ENCODE measurements at regions of chr1 and their contacts with region 1.

Region 1: GRCh38 chr1:65209005-65209885 is 61.2 kb downstream of the AK4 start:
- DNase-seq: peak; percentile 28
- H3K4me3 Mint-ChIP-seq: no peak overlapping the region
- H3K27ac Mint-ChIP-seq: no peak overlapping the region
- H3K4me1 Mint-ChIP-seq: peaks cover 23% of the 10 kb centered on the region
- H3K27me3 Mint-ChIP-seq: peaks cover 3% of the 10 kb centered on the region

Region 2: GRCh38 chr1:64686828-64687724 is 522.2 kb before region 1 on chr1:
- CTCF ChIA-PET with region 1: no interaction called
- intact Hi-C with region 1: loop called (anchors 2 kb)
- DNase-seq: peak; percentile 39
- H3K4me3 Mint-ChIP-seq: no peak overlapping the region
- H3K27ac Mint-ChIP-seq: no peak overlapping the region
- H3K4me1 Mint-ChIP-seq: peaks cover 5% of the 10 kb centered on the region
- H3K27me3 Mint-ChIP-seq: no peaks in the 10 kb centered on the region

Region 3: DNA sequence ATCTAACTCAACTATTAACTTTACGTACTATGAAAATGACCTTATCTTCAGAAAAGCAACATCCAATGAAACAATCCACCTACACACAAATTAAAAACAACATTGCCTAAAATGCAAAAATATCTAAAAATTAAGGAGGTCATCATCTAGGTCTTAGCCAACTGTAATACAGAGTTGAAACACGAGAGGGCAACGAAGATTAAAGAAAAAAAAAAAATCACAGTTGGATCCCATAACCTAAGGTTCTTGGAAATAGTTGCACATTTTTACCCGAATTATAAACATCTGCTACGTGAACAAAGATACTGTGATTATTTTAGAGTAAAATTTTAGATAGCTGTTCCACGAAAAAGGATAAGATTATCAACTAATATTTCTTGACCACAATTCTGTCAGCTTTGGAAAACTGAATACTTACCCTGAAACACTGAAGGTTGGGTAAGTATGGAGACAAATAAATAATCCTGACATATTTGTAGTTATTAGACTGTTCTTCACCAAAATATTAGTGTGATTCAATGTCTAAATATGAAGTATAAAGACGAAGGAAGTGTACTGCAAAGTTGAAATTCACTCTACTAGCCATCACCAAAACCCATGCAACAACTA is 149.2 kb before region 1 on chr1:
- CTCF ChIA-PET with region 1: interaction called, 17 read pairs
- intact Hi-C with region 1: loop called (anchors 1 kb)
- DNase-seq: no peak
- H3K4me3 Mint-ChIP-seq: no peak overlapping the region
- H3K27ac Mint-ChIP-seq: no peak overlapping the region
- H3K4me1 Mint-ChIP-seq: peaks cover 61% of the 10 kb centered on the region
- H3K27me3 Mint-ChIP-seq: no peaks in the 10 kb centered on the region

Region 4: GRCh38 chr1:65148548-65149350 is 60.5 kb before region 1 on chr1:
- CTCF ChIA-PET with region 1: interaction called, 4 read pairs
- intact Hi-C with region 1: loop called (anchors 2 kb)
- DNase-seq: peak; percentile 41
- H3K4me3 Mint-ChIP-seq: peak overlapping the region; percentile 80
- H3K27ac Mint-ChIP-seq: no peak overlapping the region
- H3K4me1 Mint-ChIP-seq: peaks cover 10% of the 10 kb centered on the region
- H3K27me3 Mint-ChIP-seq: peaks cover 47% of the 10 kb centered on the region

Region 5: GRCh38 chr1:65189576-65190115 is 19.6 kb before region 1 on chr1:
- CTCF ChIA-PET with region 1: no interaction called
- intact Hi-C with region 1: no loop called
- DNase-seq: no peak
- H3K4me3 Mint-ChIP-seq: no peak overlapping the region
- H3K27ac Mint-ChIP-seq: no peak overlapping the region
- H3K4me1 Mint-ChIP-seq: no peaks in the 10 kb centered on the region
- H3K27me3 Mint-ChIP-seq: peaks cover 2% of the 10 kb centered on the region

Region 6: GRCh38 chr1:65393347-65393746 is 184.1 kb after region 1 on chr1:
- CTCF ChIA-PET with region 1: no interaction called
- intact Hi-C with region 1: loop called (anchors 1 kb)
- DNase-seq: peak; percentile 39
- H3K4me3 Mint-ChIP-seq: no peak overlapping the region
- H3K27ac Mint-ChIP-seq: no peak overlapping the region
- H3K4me1 Mint-ChIP-seq: peaks cover 22% of the 10 kb centered on the region
- H3K27me3 Mint-ChIP-seq: no peaks in the 10 kb centered on the region

Region 7: DNA sequence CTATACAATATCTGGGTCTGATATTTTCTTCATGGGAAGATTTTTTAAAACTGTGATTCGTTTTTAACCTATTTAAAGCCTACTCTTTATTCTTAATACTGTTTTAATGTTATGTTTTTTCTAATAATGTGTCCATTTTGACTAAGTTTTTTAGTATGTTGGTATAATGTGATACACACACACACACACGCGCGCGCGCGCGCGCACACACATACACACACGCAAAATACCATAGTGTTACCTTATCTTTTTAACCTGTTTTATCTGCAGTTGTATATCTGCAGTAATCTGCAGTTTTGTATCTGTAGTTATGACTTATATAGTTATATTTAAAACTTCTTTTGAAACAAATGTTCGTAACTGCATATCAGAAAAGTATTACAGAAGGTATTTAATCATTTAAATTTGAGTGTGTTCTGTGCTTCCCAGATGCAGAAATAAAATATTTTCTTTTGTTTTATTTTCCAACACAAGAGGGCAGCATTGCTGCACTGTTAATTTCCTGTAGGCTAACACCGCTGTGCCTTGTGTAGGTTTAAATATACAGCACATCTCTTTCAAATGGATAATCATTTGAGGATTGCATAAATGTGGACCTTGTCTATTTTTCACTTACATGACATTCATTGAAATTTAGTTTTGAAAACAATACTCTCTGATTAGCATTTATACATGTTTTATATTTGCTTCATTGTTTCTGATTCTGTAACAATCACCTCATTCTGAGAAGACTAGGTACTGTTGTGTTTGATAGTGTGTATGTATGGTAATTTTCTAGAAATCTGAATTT is 749.5 kb after region 1 on chr1:
- CTCF ChIA-PET with region 1: no interaction called
- intact Hi-C with region 1: loop called (anchors 10 kb)
- DNase-seq: peak; percentile 27
- H3K4me3 Mint-ChIP-seq: no peak overlapping the region
- H3K27ac Mint-ChIP-seq: no peak overlapping the region
- H3K4me1 Mint-ChIP-seq: no peaks in the 10 kb centered on the region
- H3K27me3 Mint-ChIP-seq: no peaks in the 10 kb centered on the region